ENCODE measurements at regions of chr15 and their contacts with region 1.

Region 1: DNA sequence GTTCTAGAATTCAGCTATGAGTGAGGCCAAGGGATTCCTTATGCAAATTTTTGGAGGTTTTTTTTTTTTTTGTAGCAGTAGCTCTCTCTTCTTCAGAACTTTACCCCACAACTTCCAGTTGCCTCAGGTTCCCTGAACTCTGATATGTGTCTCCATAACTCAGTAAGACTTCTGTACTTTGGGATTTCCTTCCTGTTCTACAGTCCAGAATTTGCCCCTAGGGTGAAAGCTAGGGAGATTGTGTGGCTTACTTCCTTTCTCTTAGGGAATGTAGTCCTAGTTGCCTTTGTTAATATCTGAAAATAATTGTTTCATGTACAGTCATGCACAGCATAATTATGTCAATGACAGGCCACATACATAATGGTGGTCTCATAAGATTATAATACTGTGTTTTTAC is 30.8 kb downstream of the LRRC28 start:
- DNase-seq: no peak
- CTCF ChIP-seq: no peak

Region 2: GRCh38 chr15:99704444-99704838 is 422.3 kb after region 1 on chr15:
- in situ Hi-C with region 1: loop called (anchors 10 kb)
- DNase-seq: peak; percentile 61
- CTCF ChIP-seq: peak; percentile 62

Measured in GM13976 (cell line).